K562 (cell line): ENCODE measurements at regions of chr7 and their contacts with region 1.

Region 1: GRCh38 chr7:157273208-157274093 is 63.4 kb upstream of the DNAJB6 start:
- DNase-seq: peak; percentile 89 to 99 (median 98)
- ATAC-seq: peak; percentile 92
- H3K4me3 ChIP-seq: no peak overlapping the region
- H3K27ac ChIP-seq: no peak overlapping the region
- H3K4me1 ChIP-seq: peaks cover 4 to 26% of the 10 kb centered on the region in 2 experiments; a peak in 4 of 5 replicates
- H3K27me3 ChIP-seq: peaks cover 0 to 6% of the 10 kb centered on the region in 2 experiments; a peak in 3 of 5 replicates
- CTCF ChIP-seq: peak; percentile 97 to 98 (median 98)
- EP300 ChIP-seq: no peak
- POLR2A ChIP-seq: no peak; the same call in 1 of the 2 replicates
- RAD21 ChIP-seq: peak; percentile 88 to 93

Region 2: GRCh38 chr7:155796381-155797261 is 1476.8 kb before region 1 on chr7:
- CTCF ChIA-PET with region 1: no interaction called
- POLR2A ChIA-PET with region 1: no interaction called
- in situ Hi-C with region 1: loop called (anchors 10 kb)
- intact Hi-C with region 1: loop called (anchors 5 kb)
- DNase-seq: peak; percentile 80 to 91 (median 91)
- ATAC-seq: peak; percentile 97
- H3K4me3 ChIP-seq: no peak overlapping the region
- H3K27ac ChIP-seq: no peak overlapping the region
- H3K4me1 ChIP-seq: peaks cover 0 to 16% of the 10 kb centered on the region in 2 experiments; a peak in 2 of 5 replicates
- H3K27me3 ChIP-seq: peaks cover 38 to 59% of the 10 kb centered on the region in 2 experiments
- CTCF ChIP-seq: peak; percentile 81 to 93 (median 83)
- EP300 ChIP-seq: no peak
- POLR2A ChIP-seq: no peak
- RAD21 ChIP-seq: peak; percentile 71 to 88

Region 3: GRCh38 chr7:155804897-155805825 is 1468.3 kb before region 1 on chr7:
- CTCF ChIA-PET with region 1: no interaction called
- POLR2A ChIA-PET with region 1: no interaction called
- in situ Hi-C with region 1: loop called (anchors 10 kb)
- intact Hi-C with region 1: no loop called
- DNase-seq: peak; percentile 79 to 98 (median 96)
- ATAC-seq: peak; percentile 92
- H3K4me3 ChIP-seq: peak overlapping the region; percentile 24
- H3K27ac ChIP-seq: no peak overlapping the region
- H3K4me1 ChIP-seq: peaks cover 0 to 40% of the 10 kb centered on the region in 2 experiments; a peak in 2 of 5 replicates
- H3K27me3 ChIP-seq: peaks cover 41 to 69% of the 10 kb centered on the region in 2 experiments
- CTCF ChIP-seq: peak; percentile 55 to 97 (median 82)
- EP300 ChIP-seq: no peak
- POLR2A ChIP-seq: no peak
- RAD21 ChIP-seq: peak; percentile 35 to 73; a peak in 3 of 4 replicates

Region 4: DNA sequence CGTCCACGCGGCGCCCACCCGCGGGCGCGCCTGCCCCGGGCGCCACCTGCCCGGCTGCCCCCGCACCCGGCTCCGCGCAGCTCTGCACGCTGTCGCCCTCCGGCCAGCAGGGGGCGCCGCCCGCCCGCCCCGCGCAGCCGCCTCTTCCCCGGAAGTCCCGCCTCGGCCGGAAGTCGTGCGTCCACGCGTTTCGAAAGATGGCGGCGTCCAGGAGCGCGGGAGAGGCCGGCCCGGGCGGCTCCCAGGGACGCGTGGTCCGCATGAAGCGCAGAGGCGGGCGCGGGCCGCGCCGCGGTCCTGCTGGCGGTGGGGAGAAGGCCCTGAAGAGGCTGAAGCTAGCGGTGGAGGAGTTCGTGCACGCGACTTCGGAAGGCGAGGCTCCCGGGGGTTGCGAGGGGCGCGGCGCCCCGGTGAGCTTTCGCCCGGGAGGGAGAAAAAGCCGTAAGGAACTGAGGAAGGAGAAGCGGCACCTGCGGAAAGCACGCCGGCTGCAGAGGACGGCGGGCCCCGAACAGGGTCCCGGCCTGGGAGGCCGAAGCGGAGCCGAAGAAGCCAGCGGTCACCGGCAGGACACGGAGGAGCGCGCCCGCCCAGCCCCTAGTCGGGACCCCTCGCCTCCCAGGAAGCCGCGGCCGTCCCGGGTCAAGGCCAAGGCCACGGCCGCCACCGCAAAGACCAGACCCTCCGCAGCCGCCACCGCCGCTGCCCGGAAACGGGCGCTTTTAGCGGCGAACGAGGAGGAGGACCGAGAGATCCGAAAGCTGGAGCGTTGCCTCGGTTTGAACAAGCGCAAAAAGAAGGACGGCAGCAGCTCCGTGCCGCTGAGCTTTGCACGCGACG is 323.7 kb before region 1 on chr7 and contains the start of gene NOM1:
- CTCF ChIA-PET with region 1: no interaction called
- POLR2A ChIA-PET with region 1: interaction called, 4 read pairs
- in situ Hi-C with region 1: no loop called
- intact Hi-C with region 1: loop called (anchors 5 kb)
- DNase-seq: peak; percentile 96 to 97 (median 96)
- ATAC-seq: peak; percentile 89
- H3K4me3 ChIP-seq: peak within 1 kb of the TSS; percentile 95
- H3K27ac ChIP-seq: peak within 1 kb of the TSS; percentile 85
- H3K4me1 ChIP-seq: peaks cover 20 to 25% of the 10 kb centered on the region in 2 experiments; a peak in 4 of 5 replicates
- H3K27me3 ChIP-seq: peaks cover 2 to 4% of the 10 kb centered on the region in 2 experiments
- CTCF ChIP-seq: peak; percentile 71 to 93 (median 90)
- EP300 ChIP-seq: no peak; the same call in 1 of the 2 replicates
- POLR2A ChIP-seq: peak; percentile 94
- RAD21 ChIP-seq: peak in 1 of 2 experiments; percentile 55; a peak in 3 of 4 replicates
- polyA plus RNA-seq, gene NOM1: 6.8 to 9.6 TPM

Region 5: DNA sequence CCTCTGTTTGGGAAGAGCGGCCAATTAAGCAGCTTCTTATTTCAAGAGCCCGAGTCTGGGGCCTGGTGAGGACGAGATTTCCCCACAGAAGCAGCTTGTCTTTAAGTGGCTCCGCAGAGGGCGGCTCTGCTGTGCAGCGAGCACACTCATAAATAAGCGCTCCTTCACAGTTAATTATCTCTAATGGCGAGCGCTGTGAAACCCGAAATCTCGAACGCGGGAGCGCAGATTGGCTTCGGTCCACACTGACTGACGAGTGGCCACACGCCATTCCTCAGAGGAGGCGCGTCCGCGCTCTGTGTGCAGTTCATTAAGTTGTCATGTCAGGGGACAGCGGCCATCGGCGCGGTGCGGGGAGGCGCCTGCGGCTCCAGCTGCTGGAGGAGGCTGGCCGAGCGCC is 624.2 kb after region 1 on chr7:
- CTCF ChIA-PET with region 1: no interaction called
- POLR2A ChIA-PET with region 1: no interaction called
- in situ Hi-C with region 1: no loop called
- intact Hi-C with region 1: no loop called
- DNase-seq: no peak
- ATAC-seq: no peak; the same call in 2 of the 3 replicates
- H3K4me3 ChIP-seq: no peak overlapping the region
- H3K27ac ChIP-seq: no peak overlapping the region
- H3K4me1 ChIP-seq: peaks cover 0 to 3% of the 10 kb centered on the region in 2 experiments; a peak in 1 of 5 replicates
- H3K27me3 ChIP-seq: peaks cover 55 to 91% of the 10 kb centered on the region in 2 experiments
- CTCF ChIP-seq: no peak
- EP300 ChIP-seq: no peak
- POLR2A ChIP-seq: no peak
- RAD21 ChIP-seq: no peak